Endothelial cell of umbilical vein (primary cell): ENCODE measurements at regions of chr10 and their contacts with region 1.

Region 1: GRCh38 chr10:29403208-29403607 is 114.3 kb downstream of the LYZL1 start:
- DNase-seq: no peak
- H3K4me3 ChIP-seq: no peak overlapping the region
- H3K27ac ChIP-seq: no peak overlapping the region
- H3K4me1 ChIP-seq: no peaks in the 10 kb centered on the region
- H3K27me3 ChIP-seq: peaks cover 2 to 7% of the 10 kb centered on the region in 2 experiments
- CTCF ChIP-seq: no peak
- POLR2A ChIP-seq: no peak

Region 2: DNA sequence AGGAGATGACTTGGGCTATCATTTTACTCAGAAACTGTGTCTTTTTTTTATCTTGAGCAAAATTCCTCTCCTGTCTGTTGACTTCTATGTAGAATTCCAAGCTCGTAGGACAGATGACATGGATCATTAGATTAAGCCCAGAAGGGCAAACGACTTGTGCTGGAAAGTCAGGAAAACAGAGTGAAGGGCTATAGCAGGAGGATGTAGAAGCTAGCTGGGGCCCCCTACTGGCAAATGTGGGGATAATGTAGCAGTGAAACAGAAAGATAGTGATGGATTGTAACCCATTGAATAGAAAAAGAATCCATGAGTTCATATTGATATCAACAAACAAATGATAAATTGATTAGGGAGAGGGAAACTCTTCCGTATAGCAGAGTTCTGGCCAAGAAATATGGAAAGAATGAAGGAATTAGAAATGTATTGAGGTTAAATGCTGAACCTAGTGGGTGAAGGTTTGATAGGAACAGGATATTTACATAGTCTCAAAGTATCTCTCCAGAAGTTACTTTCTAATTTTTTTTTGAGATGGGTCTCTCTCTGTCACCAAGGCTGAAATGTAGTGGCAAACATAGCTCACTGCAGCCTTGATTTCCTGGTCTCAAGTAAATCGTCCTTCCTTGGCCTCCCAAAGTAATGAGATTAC is 10.7 kb before region 1 on chr10:
- CTCF ChIA-PET with region 1: interaction called, 10 read pairs
- POLR2A ChIA-PET with region 1: no interaction called
- dilution Hi-C with region 1: no loop called
- intact Hi-C with region 1: no loop called
- DNase-seq: peak; percentile 47
- H3K4me3 ChIP-seq: no peak overlapping the region
- H3K27ac ChIP-seq: no peak overlapping the region
- H3K4me1 ChIP-seq: no peaks in the 10 kb centered on the region
- H3K27me3 ChIP-seq: peaks cover 17 to 20% of the 10 kb centered on the region in 2 experiments
- CTCF ChIP-seq: peak; percentile 78 to 81
- POLR2A ChIP-seq: no peak